ENCODE measurements at regions of chr15 and their contacts with region 1.

Region 1: GRCh38 chr15:90735923-90736322 is 18.8 kb downstream of the BLM start:
- DNase-seq: no peak
- H3K4me3 ChIP-seq: no peak overlapping the region
- CTCF ChIP-seq: no peak

Region 2: GRCh38 chr15:90677807-90678790 is 57.8 kb before region 1 on chr15:
- in situ Hi-C with region 1: no loop called
- DNase-seq: no peak
- H3K4me3 ChIP-seq: no peak overlapping the region
- CTCF ChIP-seq: no peak

Region 3: DNA sequence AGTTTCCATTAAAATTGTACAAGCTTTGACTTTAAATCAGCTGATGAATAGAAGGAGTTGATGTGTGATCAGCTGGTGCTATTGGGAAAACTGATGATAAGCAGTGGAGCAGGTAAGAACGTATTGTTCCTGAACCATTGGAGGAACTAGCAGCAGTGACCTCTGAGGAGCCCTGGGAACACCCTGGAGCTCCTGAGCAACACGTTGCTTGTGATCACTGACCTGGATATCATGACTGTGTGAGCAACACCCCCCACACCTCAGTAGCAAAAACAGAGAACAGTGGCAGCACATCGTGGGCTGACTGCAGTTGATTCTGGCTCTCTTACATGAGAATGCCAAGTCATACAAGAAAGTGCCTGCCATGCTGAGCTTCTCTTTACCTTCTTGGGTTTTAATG is 54.1 kb after region 1 on chr15:
- in situ Hi-C with region 1: loop called (anchors 10 kb)
- DNase-seq: no peak
- H3K4me3 ChIP-seq: no peak overlapping the region
- CTCF ChIP-seq: no peak